HepG2 (cell line): ENCODE measurements at regions of chr18 and their contacts with region 1.

Region 1: GRCh38 chr18:59228351-59228750 is 8.4 kb downstream of the GRP start:
- DNase-seq: no peak
- ATAC-seq: no peak
- H3K4me3 ChIP-seq: no peak overlapping the region
- H3K27ac ChIP-seq: no peak overlapping the region
- H3K4me1 ChIP-seq: peaks cover 17% of the 10 kb centered on the region
- H3K27me3 ChIP-seq: peaks cover 0 to 1% of the 10 kb centered on the region in 2 experiments; a peak in 3 of 5 replicates
- CTCF ChIP-seq: no peak
- EP300 ChIP-seq: no peak
- POLR2A ChIP-seq: no peak
- RAD21 ChIP-seq: no peak

Region 2: DNA sequence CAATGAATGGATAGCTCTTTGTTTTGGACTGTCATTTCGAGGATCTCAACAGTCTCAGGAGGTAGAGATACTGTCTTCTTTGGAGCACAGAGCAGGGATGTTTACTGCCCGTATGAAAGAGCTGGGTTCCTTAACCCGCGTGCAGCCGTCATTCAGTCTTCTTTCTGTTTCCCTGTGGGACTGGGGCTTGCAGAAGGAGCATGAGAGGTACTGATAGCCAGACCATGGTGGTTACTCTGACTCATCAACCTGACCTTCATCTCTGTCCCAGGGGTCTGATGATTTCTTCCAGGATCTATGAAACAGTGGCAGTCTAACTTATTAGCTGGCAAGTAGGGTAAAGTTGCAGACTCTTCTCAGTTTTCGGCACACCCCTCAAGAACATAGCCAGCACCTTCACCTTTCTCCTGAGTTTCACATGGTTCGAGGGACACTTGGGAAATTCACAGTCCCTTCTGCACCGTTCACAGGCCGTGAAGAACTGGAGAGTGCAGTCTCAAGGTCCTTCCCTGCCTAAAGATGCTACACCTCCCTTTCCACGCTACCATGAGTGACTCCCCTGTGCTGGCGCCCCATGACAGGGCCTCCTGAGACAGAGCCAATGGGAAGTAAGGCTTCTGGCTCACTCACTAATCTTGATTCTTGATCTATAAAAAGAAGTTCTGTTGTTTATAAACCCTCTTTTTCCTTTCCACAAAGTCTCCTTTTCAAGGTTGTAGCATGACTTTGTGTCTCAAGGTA is 918.0 kb after region 1 on chr18:
- CTCF ChIA-PET with region 1: no interaction called
- POLR2A ChIA-PET with region 1: no interaction called
- in situ Hi-C with region 1: no loop called
- intact Hi-C with region 1: loop called (anchors 5 kb)
- DNase-seq: no peak
- ATAC-seq: no peak
- H3K4me3 ChIP-seq: no peak overlapping the region
- H3K27ac ChIP-seq: no peak overlapping the region
- H3K4me1 ChIP-seq: no peaks in the 10 kb centered on the region
- H3K27me3 ChIP-seq: no peaks in the 10 kb centered on the region
- CTCF ChIP-seq: no peak
- EP300 ChIP-seq: no peak
- POLR2A ChIP-seq: no peak
- RAD21 ChIP-seq: no peak